IMR-90 (cell line): ENCODE measurements at regions of chr1 and their contacts with region 1.

Region 1: GRCh38 chr1:6889875-6890480 is 104.7 kb downstream of the CAMTA1 start:
- DNase-seq: peak; percentile 68
- ATAC-seq: peak; percentile 87
- H3K4me3 ChIP-seq: no peak overlapping the region
- H3K27ac ChIP-seq: no peak overlapping the region
- H3K4me1 ChIP-seq: peaks cover 4% of the 10 kb centered on the region
- H3K27me3 ChIP-seq: no peaks in the 10 kb centered on the region
- CTCF ChIP-seq: peak; percentile 77
- POLR2A ChIP-seq: no peak
- RAD21 ChIP-seq: peak; percentile 80

Region 2: DNA sequence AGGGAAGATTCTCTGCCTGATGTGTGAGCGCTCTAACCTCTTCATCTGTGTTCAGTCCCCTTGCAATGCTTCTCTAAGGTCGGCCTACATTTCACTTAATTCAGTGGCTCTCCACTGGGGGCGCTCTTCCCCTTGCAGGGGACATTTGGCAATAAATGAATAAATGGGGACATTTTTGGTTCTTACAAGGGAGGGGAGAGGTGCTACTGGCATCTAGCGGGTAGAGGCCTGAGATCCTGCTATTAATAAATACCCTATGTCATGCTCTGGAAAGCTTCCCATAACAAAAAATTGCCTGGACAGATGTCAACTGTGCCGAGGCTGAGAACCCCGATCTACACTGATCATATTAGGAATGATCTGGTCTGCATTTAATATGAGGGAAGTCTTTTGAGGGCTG is 162.4 kb before region 1 on chr1:
- CTCF ChIA-PET with region 1: no interaction called
- POLR2A ChIA-PET with region 1: no interaction called
- dilution Hi-C with region 1: no loop called
- in situ Hi-C with region 1: loop called (anchors 10 kb)
- intact Hi-C with region 1: no loop called
- DNase-seq: peak; percentile 54
- ATAC-seq: peak; percentile 22; the same call in 1 of the 2 replicates
- H3K4me3 ChIP-seq: no peak overlapping the region
- H3K27ac ChIP-seq: no peak overlapping the region
- H3K4me1 ChIP-seq: peaks cover 9% of the 10 kb centered on the region
- H3K27me3 ChIP-seq: peaks cover 3% of the 10 kb centered on the region; the same call in 1 of the 2 replicates
- CTCF ChIP-seq: peak; percentile 79
- POLR2A ChIP-seq: no peak
- RAD21 ChIP-seq: peak; percentile 66

Region 3: GRCh38 chr1:7218210-7218832 is 328.3 kb after region 1 on chr1:
- CTCF ChIA-PET with region 1: no interaction called
- POLR2A ChIA-PET with region 1: no interaction called
- dilution Hi-C with region 1: no loop called
- in situ Hi-C with region 1: no loop called
- intact Hi-C with region 1: loop called (anchors 10 kb)
- DNase-seq: peak; percentile 63
- ATAC-seq: peak; percentile 67; the same call in 1 of the 2 replicates
- H3K4me3 ChIP-seq: no peak overlapping the region
- H3K27ac ChIP-seq: no peak overlapping the region
- H3K4me1 ChIP-seq: peaks cover 3% of the 10 kb centered on the region
- H3K27me3 ChIP-seq: no peaks in the 10 kb centered on the region
- CTCF ChIP-seq: peak; percentile 77
- POLR2A ChIP-seq: no peak
- RAD21 ChIP-seq: peak; percentile 78